Activated CD8-positive, alpha-beta T cell treated with anti-CD3 and anti-CD28 coated beads, Interleukin-2, amount 10 ng/mL, durations not matched to agents 7 days and 5 days (primary cell): ENCODE measurements at regions of chr11 and their contacts with region 1.

Region 1: DNA sequence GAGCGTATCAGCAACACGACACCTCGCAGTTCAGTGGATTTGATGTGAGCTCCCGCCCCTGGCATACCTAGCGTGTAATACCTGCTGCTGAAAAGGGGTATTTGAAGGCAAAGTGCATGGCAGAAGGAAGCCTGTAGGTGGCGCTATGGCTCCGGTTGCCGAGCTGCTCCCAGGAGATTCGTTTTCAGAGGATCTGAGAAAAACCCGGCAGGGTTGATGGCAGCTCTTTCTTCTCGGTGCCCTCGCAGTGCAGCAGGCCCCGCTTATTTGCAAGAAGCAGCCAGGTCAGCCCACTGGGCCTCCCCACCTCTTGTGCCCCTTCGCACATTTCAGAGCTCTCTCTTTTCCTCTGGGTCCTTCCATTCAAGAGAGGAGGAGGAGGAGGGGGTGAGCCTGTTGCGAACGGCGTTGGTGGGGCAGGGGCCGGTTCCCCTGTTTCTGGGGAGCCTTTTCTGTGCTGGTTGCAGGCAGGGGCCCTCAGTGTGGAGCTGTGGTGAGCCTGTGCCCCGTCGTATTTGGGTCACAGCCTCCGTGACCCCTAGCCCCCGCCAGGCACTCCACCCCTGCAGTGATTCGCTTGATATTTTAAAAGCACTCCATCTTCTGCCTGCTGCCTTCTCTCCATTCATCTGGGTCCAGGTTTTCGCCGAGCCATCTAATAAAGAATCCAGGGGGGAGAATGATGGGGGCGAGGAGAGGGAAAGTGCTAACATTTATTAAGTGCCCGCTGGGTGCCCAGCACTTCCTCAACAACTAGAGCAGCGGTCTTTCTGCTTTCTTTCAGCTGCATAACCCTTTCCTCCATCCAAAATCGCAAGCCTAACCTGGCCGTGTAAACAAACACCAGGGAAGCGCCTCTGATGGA is 85.3 kb upstream of the SYT13 start:
- DNase-seq: peak; percentile 71
- ATAC-seq: peak; percentile 41
- H3K4me3 Mint-ChIP-seq: no peak overlapping the region
- H3K27ac Mint-ChIP-seq: no peak overlapping the region
- H3K4me1 Mint-ChIP-seq: peaks cover 8% of the 10 kb centered on the region
- H3K27me3 Mint-ChIP-seq: peaks cover 16% of the 10 kb centered on the region

Region 2: GRCh38 chr11:45007011-45007410 is 364.5 kb before region 1 on chr11:
- CTCF ChIA-PET with region 1: no interaction called
- POLR2A ChIA-PET with region 1: no interaction called
- DNase-seq: no peak
- ATAC-seq: no peak
- H3K4me3 Mint-ChIP-seq: no peak overlapping the region
- H3K27ac Mint-ChIP-seq: no peak overlapping the region
- H3K4me1 Mint-ChIP-seq: peaks cover under 1% of the 10 kb centered on the region
- H3K27me3 Mint-ChIP-seq: peaks cover 22% of the 10 kb centered on the region

Region 3: DNA sequence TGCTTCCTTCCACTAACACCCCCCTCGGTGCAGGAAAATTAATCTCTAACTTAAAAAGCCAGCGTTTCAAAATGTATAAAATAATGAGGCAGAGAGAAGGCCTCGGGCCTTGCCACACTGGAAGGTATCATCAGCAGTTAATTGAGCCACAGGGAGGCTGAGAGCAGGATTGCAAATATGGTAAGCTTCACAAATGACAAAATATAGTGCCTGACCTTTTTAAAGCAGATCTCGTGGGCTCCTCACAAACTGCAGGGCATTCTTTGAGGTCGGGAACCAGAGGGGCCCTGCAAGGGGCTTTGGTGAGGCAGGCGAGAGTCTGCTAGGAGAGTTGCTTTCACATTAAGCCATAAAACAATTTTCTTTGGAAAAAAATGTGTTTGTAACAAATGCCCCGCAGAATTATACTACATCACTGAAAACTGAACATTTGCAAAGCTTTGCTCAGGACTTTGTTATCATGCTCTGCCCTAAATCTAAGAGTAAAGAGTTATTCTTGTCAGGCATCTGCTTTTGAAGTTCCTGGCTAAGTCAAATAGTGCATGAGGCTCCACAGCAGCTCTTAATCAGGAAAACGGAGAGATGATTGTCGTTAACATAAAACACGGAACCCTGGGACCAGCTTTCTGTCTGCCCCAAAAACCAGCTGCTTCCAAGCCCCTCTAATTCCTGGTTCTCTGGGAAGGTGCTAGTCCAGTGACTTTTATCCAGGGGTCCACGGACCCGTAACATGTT is 24.0 kb before region 1 on chr11:
- CTCF ChIA-PET with region 1: interaction called, 14 read pairs
- POLR2A ChIA-PET with region 1: no interaction called
- DNase-seq: no peak
- ATAC-seq: no peak
- H3K4me3 Mint-ChIP-seq: no peak overlapping the region
- H3K27ac Mint-ChIP-seq: no peak overlapping the region
- H3K4me1 Mint-ChIP-seq: no peaks in the 10 kb centered on the region
- H3K27me3 Mint-ChIP-seq: peaks cover 35% of the 10 kb centered on the region

Region 4: GRCh38 chr11:45354976-45355705 is 16.3 kb before region 1 on chr11:
- CTCF ChIA-PET with region 1: interaction called, 20 read pairs
- POLR2A ChIA-PET with region 1: no interaction called
- DNase-seq: peak; percentile 88
- ATAC-seq: peak; percentile 89
- H3K4me3 Mint-ChIP-seq: peak overlapping the region; percentile 73
- H3K27ac Mint-ChIP-seq: peak overlapping the region; percentile 79
- H3K4me1 Mint-ChIP-seq: peaks cover 13% of the 10 kb centered on the region
- H3K27me3 Mint-ChIP-seq: peaks cover 22% of the 10 kb centered on the region

Region 5: DNA sequence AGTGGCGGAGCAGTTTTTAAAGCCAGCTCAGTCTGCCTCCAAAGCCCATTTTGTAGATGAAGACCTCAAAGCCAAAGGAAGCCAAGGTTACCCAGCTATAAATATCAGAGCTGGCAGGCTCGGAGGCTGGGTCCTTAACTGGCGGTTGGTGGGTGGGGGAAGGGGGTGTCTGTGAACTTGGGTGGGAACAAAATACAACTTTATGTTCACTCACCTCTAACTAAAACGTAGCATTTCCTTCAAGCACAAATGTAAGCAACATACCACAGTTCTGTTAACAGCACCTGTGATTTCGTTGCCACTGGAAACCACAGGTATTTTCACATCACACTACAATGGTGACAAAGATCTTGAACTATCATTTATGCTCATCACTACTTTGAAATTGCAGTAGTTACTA is 14.4 kb after region 1 on chr11:
- CTCF ChIA-PET with region 1: interaction called, 18 read pairs
- POLR2A ChIA-PET with region 1: no interaction called
- DNase-seq: no peak
- ATAC-seq: peak; percentile 48
- H3K4me3 Mint-ChIP-seq: no peak overlapping the region
- H3K27ac Mint-ChIP-seq: no peak overlapping the region
- H3K4me1 Mint-ChIP-seq: peaks cover 14% of the 10 kb centered on the region
- H3K27me3 Mint-ChIP-seq: peaks cover 20% of the 10 kb centered on the region

Region 6: GRCh38 chr11:45655347-45655756 is 283.9 kb after region 1 on chr11:
- CTCF ChIA-PET with region 1: interaction called, 17 read pairs
- POLR2A ChIA-PET with region 1: no interaction called
- DNase-seq: peak; percentile 68
- ATAC-seq: peak; percentile 70
- H3K4me3 Mint-ChIP-seq: no peak overlapping the region
- H3K27ac Mint-ChIP-seq: no peak overlapping the region
- H3K4me1 Mint-ChIP-seq: peaks cover 20% of the 10 kb centered on the region
- H3K27me3 Mint-ChIP-seq: peaks cover 23% of the 10 kb centered on the region